ENCODE measurements at regions of chr12 and their contacts with region 1.

Region 1: GRCh38 chr12:112160611-112161010 is 35.3 kb downstream of the TRAFD1 start:
- DNase-seq: no peak
- H3K4me3 ChIP-seq: no peak overlapping the region
- H3K4me3 Mint-ChIP-seq: no peak overlapping the region
- H3K27ac ChIP-seq: no peak overlapping the region
- H3K27ac Mint-ChIP-seq: peak overlapping the region in 6 of 7 donors; percentile 22 to 91 (median 67)
- H3K4me1 ChIP-seq: peaks cover 22% of the 10 kb centered on the region
- H3K4me1 Mint-ChIP-seq: peaks cover 19 to 43% (median 35%) of the 10 kb centered on the region in 4 donors
- H3K27me3 ChIP-seq: no peaks in the 10 kb centered on the region
- H3K27me3 Mint-ChIP-seq: no peaks in the 10 kb centered on the region

Region 2: DNA sequence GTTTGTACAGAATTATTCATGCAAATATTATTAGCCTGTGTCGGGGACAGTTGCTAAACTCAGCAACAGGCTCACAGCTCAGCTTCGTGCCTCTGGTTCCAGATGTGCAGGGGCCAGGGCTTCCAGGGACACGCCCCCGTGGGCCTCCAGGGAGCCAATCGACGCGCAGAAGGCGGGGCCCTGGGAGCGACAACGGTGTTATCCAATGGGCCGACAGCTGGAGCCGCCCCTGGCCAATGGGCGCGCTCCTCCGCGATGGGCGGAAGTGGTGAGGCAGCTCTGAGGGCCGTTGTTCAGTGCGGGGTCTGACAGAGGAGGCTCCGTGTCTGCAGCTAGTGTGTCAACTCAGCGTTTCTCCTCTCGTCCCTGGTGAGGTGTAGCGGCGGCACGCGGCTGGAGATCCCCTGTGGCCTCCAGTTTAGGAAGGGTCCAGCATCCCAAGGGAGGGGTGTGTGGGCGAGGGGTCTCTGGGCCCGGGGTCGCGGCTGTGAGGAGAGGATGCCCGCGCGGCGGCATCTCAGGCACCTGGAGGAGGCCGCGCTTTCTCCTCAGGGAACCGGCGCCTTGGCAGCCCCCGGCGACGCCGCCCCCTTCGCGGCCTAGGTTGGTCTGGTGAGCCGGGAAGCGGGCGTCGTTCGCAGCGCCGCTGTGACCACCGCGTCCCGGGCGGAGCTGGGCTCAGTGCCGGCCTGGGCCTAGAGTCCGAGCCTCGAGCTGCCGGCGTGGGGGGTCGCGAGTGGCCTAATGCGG is 35.2 kb before region 1 on chr12 and contains the start of gene TRAFD1:
- CTCF ChIA-PET with region 1: interaction called, 4 read pairs
- POLR2A ChIA-PET with region 1: interaction called, 23 read pairs
- intact Hi-C with region 1: no loop called
- DNase-seq: peak; percentile 97 to 99 (median 98)
- H3K4me3 ChIP-seq: peak within 1 kb of the TSS; percentile 63 to 99
- H3K4me3 Mint-ChIP-seq: peak within 1 kb of the TSS; percentile 78 to 93 (median 88)
- H3K27ac ChIP-seq: peak within 1 kb of the TSS; percentile 86
- H3K27ac Mint-ChIP-seq: peak within 1 kb of the TSS; percentile 83 to 95 (median 91)
- H3K4me1 ChIP-seq: peaks cover 52% of the 10 kb centered on the region
- H3K4me1 Mint-ChIP-seq: peaks cover 15 to 50% (median 33%) of the 10 kb centered on the region in 4 donors
- H3K27me3 ChIP-seq: no peaks in the 10 kb centered on the region
- H3K27me3 Mint-ChIP-seq: no peaks in the 10 kb centered on the region
- total RNA-seq, gene TRAFD1: 38.7 to 42.7 TPM

Region 3: GRCh38 chr12:112140728-112141127 is 19.9 kb before region 1 on chr12:
- CTCF ChIA-PET with region 1: no interaction called
- POLR2A ChIA-PET with region 1: no interaction called
- intact Hi-C with region 1: no loop called
- DNase-seq: no peak
- H3K4me3 ChIP-seq: no peak overlapping the region
- H3K4me3 Mint-ChIP-seq: no peak overlapping the region
- H3K27ac ChIP-seq: no peak overlapping the region
- H3K27ac Mint-ChIP-seq: peak overlapping the region in 2 of 7 donors; percentile 7 to 44
- H3K4me1 ChIP-seq: no peaks in the 10 kb centered on the region
- H3K4me1 Mint-ChIP-seq: peaks cover 0 to 7% (median 3%) of the 10 kb centered on the region in 4 donors
- H3K27me3 ChIP-seq: no peaks in the 10 kb centered on the region
- H3K27me3 Mint-ChIP-seq: no peaks in the 10 kb centered on the region

Measured in CD4-positive, alpha-beta memory T cell (primary cell).